ENCODE measurements at regions of chr17 and their contacts with region 1.

Region 1: GRCh38 chr17:47663912-47664625 is 14.3 kb downstream of the KPNB1 start:
- DNase-seq: peak; percentile 30 to 82 (median 62)
- ATAC-seq: peak; percentile 66
- H3K4me3 ChIP-seq: no peak overlapping the region
- H3K4me3 Mint-ChIP-seq: no peak overlapping the region
- H3K27ac ChIP-seq: peak overlapping the region in 1 of 2 experiments; percentile 6
- H3K27ac Mint-ChIP-seq: peak overlapping the region; percentile 66
- H3K4me1 ChIP-seq: peaks cover 13% of the 10 kb centered on the region
- H3K4me1 Mint-ChIP-seq: peaks cover 19% of the 10 kb centered on the region
- H3K27me3 ChIP-seq: no peaks in the 10 kb centered on the region
- H3K27me3 Mint-ChIP-seq: no peaks in the 10 kb centered on the region
- CTCF ChIP-seq: peak; percentile 88

Region 2: DNA sequence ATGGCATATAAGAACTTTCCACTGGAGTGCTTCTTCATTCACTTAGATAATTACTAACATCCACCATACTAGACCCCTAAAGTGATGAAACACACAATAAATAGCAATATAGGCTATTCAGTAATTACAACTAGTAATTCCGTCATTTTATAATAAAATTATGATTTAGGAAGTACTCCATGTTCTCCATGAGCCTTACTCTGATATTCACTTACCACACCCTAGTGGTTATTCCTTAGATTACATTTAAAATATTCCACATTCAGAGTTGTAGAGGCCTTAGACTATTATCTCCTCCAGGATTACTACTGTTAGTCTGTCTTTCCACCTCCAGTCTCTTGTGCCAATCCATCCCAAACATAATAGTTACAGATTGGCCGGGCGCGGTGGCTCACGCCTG is 1602.6 kb before region 1 on chr17:
- CTCF ChIA-PET with region 1: no interaction called
- POLR2A ChIA-PET with region 1: no interaction called
- intact Hi-C with region 1: no loop called
- DNase-seq: peak in 1 of 9 experiments; percentile 25
- ATAC-seq: no peak
- H3K4me3 ChIP-seq: no peak overlapping the region
- H3K4me3 Mint-ChIP-seq: no peak overlapping the region
- H3K27ac ChIP-seq: no peak overlapping the region
- H3K27ac Mint-ChIP-seq: no peak overlapping the region
- H3K4me1 ChIP-seq: no peaks in the 10 kb centered on the region
- H3K4me1 Mint-ChIP-seq: peaks cover 25% of the 10 kb centered on the region
- H3K27me3 ChIP-seq: no peaks in the 10 kb centered on the region
- H3K27me3 Mint-ChIP-seq: no peaks in the 10 kb centered on the region
- CTCF ChIP-seq: peak; percentile 51

Region 3: GRCh38 chr17:47649153-47649971 is 14.7 kb before region 1 on chr17 and contains the start of gene KPNB1:
- CTCF ChIA-PET with region 1: interaction called, 46 read pairs
- POLR2A ChIA-PET with region 1: interaction called, 32 read pairs
- intact Hi-C with region 1: loop called in 1 of 2 experiments (anchors 1 kb)
- DNase-seq: peak; percentile 94 to 99 (median 97)
- ATAC-seq: peak; percentile 82
- H3K4me3 ChIP-seq: peak within 1 kb of the TSS; percentile 70 to 89
- H3K4me3 Mint-ChIP-seq: peak within 1 kb of the TSS; percentile 100
- H3K27ac ChIP-seq: peak within 1 kb of the TSS; percentile 75 to 90
- H3K27ac Mint-ChIP-seq: peak within 1 kb of the TSS; percentile 99
- H3K4me1 ChIP-seq: peaks cover 41% of the 10 kb centered on the region
- H3K4me1 Mint-ChIP-seq: peaks cover 51% of the 10 kb centered on the region
- H3K27me3 ChIP-seq: no peaks in the 10 kb centered on the region
- H3K27me3 Mint-ChIP-seq: no peaks in the 10 kb centered on the region
- CTCF ChIP-seq: no peak
- total RNA-seq, gene KPNB1: 170 to 173 TPM

Region 4: DNA sequence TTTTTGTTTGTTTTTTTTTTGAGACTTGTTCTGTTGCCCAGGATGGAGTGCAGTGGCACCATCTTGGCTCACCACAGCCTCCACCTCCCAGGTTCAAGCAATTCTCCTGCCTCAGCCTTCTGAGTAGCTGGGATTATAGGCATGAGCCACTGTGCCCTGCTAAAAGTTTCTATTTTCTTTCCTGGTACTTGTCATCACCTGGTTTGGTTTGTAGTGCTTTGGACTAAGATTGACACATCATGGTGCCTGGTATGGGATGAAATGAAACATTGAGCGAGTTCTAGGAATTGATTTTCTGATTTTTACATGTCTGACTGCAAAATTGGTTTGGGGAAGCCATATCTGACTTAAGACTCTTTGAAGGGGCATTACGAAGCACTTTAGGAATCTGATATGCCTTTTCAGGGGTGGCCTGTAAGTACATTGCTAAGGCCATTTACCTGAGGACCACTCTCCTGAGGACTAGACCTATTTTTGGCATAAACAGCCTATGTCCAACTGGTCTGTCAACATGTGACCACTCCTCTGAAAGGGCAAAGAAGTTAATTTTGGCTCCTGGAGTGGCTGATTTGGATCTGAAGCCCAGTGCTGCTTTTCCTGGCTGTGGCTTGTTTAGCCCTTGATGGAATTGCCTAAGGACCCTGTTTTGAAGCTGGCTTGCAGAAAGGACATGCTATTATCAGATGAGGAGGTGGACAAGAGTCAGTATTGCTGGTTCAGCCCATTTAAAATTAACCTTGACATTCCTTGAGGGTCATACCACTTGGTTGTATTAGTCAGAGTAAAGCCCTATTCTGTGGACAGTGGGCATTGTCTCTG is 11.5 kb after region 1 on chr17:
- CTCF ChIA-PET with region 1: interaction called, 49 read pairs
- POLR2A ChIA-PET with region 1: interaction called, 4 read pairs
- intact Hi-C with region 1: no loop called
- DNase-seq: no peak
- ATAC-seq: no peak
- H3K4me3 ChIP-seq: no peak overlapping the region
- H3K4me3 Mint-ChIP-seq: no peak overlapping the region
- H3K27ac ChIP-seq: no peak overlapping the region
- H3K27ac Mint-ChIP-seq: no peak overlapping the region
- H3K4me1 ChIP-seq: no peaks in the 10 kb centered on the region
- H3K4me1 Mint-ChIP-seq: peaks cover 22% of the 10 kb centered on the region
- H3K27me3 ChIP-seq: no peaks in the 10 kb centered on the region
- H3K27me3 Mint-ChIP-seq: no peaks in the 10 kb centered on the region
- CTCF ChIP-seq: no peak

Region 5: DNA sequence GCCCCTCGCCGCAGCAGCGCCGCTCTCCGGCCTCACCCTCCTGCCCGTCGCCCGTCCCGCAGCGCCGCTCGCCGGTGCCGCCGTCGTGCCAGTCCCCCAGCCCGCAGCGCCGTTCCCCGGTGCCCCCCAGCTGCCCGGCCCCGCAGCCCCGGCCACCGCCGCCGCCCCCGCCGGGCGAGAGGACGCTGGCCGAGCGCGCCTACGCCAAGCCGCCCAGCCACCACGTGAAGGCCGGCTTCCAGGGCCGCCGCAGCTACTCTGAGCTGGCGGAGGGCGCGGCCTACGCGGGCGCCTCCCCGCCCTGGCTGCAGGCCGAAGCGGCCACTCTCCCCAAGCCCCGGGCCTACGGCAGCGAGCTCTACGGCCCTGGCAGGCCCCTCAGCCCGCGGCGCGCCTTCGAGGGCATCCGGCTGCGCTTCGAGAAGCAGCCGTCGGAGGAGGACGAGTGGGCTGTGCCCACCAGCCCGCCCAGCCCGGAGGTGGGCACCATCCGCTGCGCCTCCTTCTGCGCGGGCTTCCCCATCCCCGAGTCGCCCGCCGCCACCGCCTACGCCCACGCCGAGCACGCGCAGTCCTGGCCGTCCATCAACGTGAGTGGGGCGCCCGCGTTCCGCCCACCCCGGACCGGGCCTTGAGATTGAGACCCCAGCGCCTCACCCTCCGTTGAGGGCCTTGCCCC is 44.9 kb after region 1 on chr17:
- CTCF ChIA-PET with region 1: interaction called, 10 read pairs
- POLR2A ChIA-PET with region 1: no interaction called
- intact Hi-C with region 1: no loop called
- DNase-seq: no peak
- ATAC-seq: no peak
- H3K4me3 ChIP-seq: no peak overlapping the region
- H3K4me3 Mint-ChIP-seq: no peak overlapping the region
- H3K27ac ChIP-seq: no peak overlapping the region
- H3K27ac Mint-ChIP-seq: no peak overlapping the region
- H3K4me1 ChIP-seq: peaks cover 67% of the 10 kb centered on the region
- H3K4me1 Mint-ChIP-seq: peaks cover 56% of the 10 kb centered on the region
- H3K27me3 ChIP-seq: no peaks in the 10 kb centered on the region
- H3K27me3 Mint-ChIP-seq: no peaks in the 10 kb centered on the region
- CTCF ChIP-seq: no peak

Region 6: GRCh38 chr17:47742319-47743181 is 78.5 kb after region 1 on chr17:
- CTCF ChIA-PET with region 1: interaction called, 31 read pairs
- POLR2A ChIA-PET with region 1: no interaction called
- intact Hi-C with region 1: loop called (anchors 1 kb)
- DNase-seq: peak in 6 of 9 experiments; percentile 52 to 75 (median 62)
- ATAC-seq: peak; percentile 59
- H3K4me3 ChIP-seq: peak overlapping the region in 1 of 2 experiments; percentile 1
- H3K4me3 Mint-ChIP-seq: peak overlapping the region; percentile 11
- H3K27ac ChIP-seq: peak overlapping the region in 1 of 2 experiments; percentile 68
- H3K27ac Mint-ChIP-seq: peak overlapping the region; percentile 79
- H3K4me1 ChIP-seq: peaks cover 15% of the 10 kb centered on the region
- H3K4me1 Mint-ChIP-seq: peaks cover 26% of the 10 kb centered on the region
- H3K27me3 ChIP-seq: no peaks in the 10 kb centered on the region
- H3K27me3 Mint-ChIP-seq: no peaks in the 10 kb centered on the region
- CTCF ChIP-seq: peak; percentile 43

Region 7: GRCh38 chr17:47789611-47790561 is 125.8 kb after region 1 on chr17:
- CTCF ChIA-PET with region 1: interaction called, 15 read pairs
- POLR2A ChIA-PET with region 1: no interaction called
- intact Hi-C with region 1: no loop called
- DNase-seq: peak in 8 of 9 experiments; percentile 16 to 76 (median 47)
- ATAC-seq: peak; percentile 88
- H3K4me3 ChIP-seq: peak overlapping the region; percentile 35 to 40
- H3K4me3 Mint-ChIP-seq: peak overlapping the region; percentile 67
- H3K27ac ChIP-seq: no peak overlapping the region
- H3K27ac Mint-ChIP-seq: no peak overlapping the region
- H3K4me1 ChIP-seq: peaks cover 3% of the 10 kb centered on the region
- H3K4me1 Mint-ChIP-seq: peaks cover 12% of the 10 kb centered on the region
- H3K27me3 ChIP-seq: peaks cover 10 to 21% of the 10 kb centered on the region in 2 experiments
- H3K27me3 Mint-ChIP-seq: peaks cover 58% of the 10 kb centered on the region
- CTCF ChIP-seq: peak; percentile 57

Region 8: DNA sequence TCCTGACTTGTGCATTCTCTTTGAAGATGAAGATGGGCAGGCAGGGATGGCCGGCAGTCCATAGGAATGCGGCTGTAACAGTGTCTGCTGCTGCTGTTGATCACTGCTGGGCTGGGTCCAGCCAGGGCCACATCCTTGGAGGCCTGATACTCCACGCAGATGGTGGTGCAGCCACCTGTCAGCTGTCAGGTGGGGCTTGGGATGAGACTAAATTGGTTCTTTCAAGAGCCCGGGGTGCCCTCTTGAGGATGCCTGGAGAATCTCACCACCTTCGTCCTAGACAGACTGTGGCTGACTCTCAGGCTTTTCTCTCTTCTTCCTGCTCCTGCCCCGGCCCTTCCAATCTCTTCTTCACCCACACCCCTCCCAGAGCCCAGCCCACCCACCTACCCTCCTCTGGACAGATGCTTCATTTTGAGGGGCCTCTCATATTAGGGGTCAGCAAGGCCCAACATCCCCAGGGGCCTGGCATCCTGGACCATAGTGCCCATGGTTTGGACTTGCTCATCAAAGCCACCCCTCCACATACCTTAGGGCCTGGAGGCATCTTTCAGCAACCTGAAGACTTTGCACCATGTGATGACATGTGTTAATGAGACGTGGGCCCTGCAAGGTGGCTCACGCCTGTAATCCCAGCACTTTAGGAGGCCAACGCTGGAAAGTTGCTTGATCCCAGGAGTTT is 138.4 kb after region 1 on chr17:
- CTCF ChIA-PET with region 1: interaction called, 22 read pairs
- POLR2A ChIA-PET with region 1: no interaction called
- intact Hi-C with region 1: loop called (anchors 2 to 5 kb)
- DNase-seq: peak; percentile 27 to 73 (median 60)
- ATAC-seq: peak; percentile 92
- H3K4me3 ChIP-seq: no peak overlapping the region
- H3K4me3 Mint-ChIP-seq: no peak overlapping the region
- H3K27ac ChIP-seq: no peak overlapping the region
- H3K27ac Mint-ChIP-seq: no peak overlapping the region
- H3K4me1 ChIP-seq: no peaks in the 10 kb centered on the region
- H3K4me1 Mint-ChIP-seq: no peaks in the 10 kb centered on the region
- H3K27me3 ChIP-seq: no peaks in the 10 kb centered on the region
- H3K27me3 Mint-ChIP-seq: peaks cover 3% of the 10 kb centered on the region
- CTCF ChIP-seq: peak; percentile 54